ENCODE measurements at regions of chr15 and their contacts with region 1.

Region 1: DNA sequence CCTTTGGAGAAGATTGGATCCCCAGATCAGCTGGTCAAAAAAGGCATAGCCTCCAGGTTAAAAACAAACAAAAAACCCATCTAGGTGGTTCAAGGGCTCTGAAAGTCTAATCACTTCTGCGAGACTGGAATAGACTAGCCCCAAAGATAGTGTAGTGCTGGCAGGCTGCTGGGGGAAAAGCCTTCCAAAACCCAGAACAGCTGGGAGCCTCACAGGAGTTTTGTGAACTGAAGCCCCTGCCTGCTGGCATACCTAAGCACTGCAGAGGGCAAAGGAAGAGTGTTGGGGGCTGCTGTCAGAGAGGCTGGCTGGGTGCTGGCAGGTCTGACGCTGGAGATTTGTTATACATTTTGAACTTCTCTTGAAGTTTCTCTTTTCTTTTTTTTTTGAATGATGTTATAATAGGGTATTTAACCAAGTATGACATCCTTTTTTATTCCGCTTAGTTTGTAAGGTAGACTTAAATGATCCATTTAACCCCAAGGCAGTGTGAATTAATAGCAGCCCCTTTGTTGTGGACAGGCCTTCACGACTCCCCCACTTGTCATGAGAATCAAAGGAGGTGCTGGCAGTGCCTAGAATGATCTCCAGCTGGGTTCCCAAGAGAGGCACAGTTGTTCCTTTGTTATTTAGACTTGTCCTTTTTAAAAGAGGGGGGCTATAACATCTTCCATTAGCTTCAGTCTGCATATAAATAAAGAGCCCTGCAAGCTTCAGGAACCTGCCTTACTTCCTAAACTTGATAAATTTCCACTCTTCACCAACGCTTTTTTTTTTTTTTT is 53.9 kb downstream of the CRTC3 start:
- DNase-seq: no peak
- ATAC-seq: no peak
- H3K4me3 ChIP-seq: no peak overlapping the region
- H3K4me3 Mint-ChIP-seq: no peak overlapping the region
- H3K27ac ChIP-seq: no peak overlapping the region
- H3K27ac Mint-ChIP-seq: peak overlapping the region; percentile 89
- H3K4me1 ChIP-seq: peaks cover 59% of the 10 kb centered on the region
- H3K4me1 Mint-ChIP-seq: peaks cover 66% of the 10 kb centered on the region
- H3K27me3 ChIP-seq: no peaks in the 10 kb centered on the region
- H3K27me3 Mint-ChIP-seq: no peaks in the 10 kb centered on the region
- CTCF ChIP-seq: no peak

Region 2: GRCh38 chr15:90419738-90420406 is 163.8 kb before region 1 on chr15:
- CTCF ChIA-PET with region 1: no interaction called
- POLR2A ChIA-PET with region 1: no interaction called
- intact Hi-C with region 1: no loop called
- DNase-seq: no peak
- ATAC-seq: no peak
- H3K4me3 ChIP-seq: no peak overlapping the region
- H3K4me3 Mint-ChIP-seq: peak overlapping the region; percentile 26
- H3K27ac ChIP-seq: no peak overlapping the region
- H3K27ac Mint-ChIP-seq: peak overlapping the region; percentile 71
- H3K4me1 ChIP-seq: peaks cover 38% of the 10 kb centered on the region
- H3K4me1 Mint-ChIP-seq: peaks cover 72% of the 10 kb centered on the region
- H3K27me3 ChIP-seq: no peaks in the 10 kb centered on the region
- H3K27me3 Mint-ChIP-seq: no peaks in the 10 kb centered on the region
- CTCF ChIP-seq: no peak

Region 3: DNA sequence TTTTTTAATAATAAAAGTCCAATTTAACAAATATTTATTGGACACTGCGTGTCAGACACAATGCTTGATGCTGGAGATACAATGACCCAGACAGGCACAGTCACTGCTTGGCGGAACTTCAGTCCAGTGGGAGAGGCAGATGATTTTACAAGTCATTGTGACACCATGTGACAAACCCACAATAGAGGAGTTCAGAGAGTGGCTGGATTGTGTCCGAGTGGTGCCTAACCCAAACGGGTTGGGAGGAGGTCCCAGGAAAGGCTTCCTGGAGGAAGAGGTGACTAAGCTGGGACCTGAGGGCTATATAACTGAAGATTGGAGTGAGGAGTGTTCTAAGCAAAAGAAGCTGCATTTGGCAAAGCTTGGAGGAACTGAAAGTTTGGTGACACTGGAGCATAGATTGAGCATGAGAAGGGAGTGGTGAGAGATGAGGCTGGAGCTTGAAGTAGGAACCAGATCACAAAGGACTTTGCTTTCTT is 12.6 kb before region 1 on chr15:
- CTCF ChIA-PET with region 1: interaction called, 5 read pairs
- POLR2A ChIA-PET with region 1: interaction called, 3 read pairs
- intact Hi-C with region 1: loop called in 1 of 2 experiments (anchors 1 kb)
- DNase-seq: peak in 2 of 14 experiments; percentile 53 to 60
- ATAC-seq: no peak
- H3K4me3 ChIP-seq: no peak overlapping the region
- H3K4me3 Mint-ChIP-seq: no peak overlapping the region
- H3K27ac ChIP-seq: peak overlapping the region in 1 of 2 donors; percentile 32
- H3K27ac Mint-ChIP-seq: peak overlapping the region; percentile 77
- H3K4me1 ChIP-seq: peaks cover 77% of the 10 kb centered on the region
- H3K4me1 Mint-ChIP-seq: peaks cover 89% of the 10 kb centered on the region
- H3K27me3 ChIP-seq: no peaks in the 10 kb centered on the region
- H3K27me3 Mint-ChIP-seq: no peaks in the 10 kb centered on the region
- CTCF ChIP-seq: no peak

Region 4: DNA sequence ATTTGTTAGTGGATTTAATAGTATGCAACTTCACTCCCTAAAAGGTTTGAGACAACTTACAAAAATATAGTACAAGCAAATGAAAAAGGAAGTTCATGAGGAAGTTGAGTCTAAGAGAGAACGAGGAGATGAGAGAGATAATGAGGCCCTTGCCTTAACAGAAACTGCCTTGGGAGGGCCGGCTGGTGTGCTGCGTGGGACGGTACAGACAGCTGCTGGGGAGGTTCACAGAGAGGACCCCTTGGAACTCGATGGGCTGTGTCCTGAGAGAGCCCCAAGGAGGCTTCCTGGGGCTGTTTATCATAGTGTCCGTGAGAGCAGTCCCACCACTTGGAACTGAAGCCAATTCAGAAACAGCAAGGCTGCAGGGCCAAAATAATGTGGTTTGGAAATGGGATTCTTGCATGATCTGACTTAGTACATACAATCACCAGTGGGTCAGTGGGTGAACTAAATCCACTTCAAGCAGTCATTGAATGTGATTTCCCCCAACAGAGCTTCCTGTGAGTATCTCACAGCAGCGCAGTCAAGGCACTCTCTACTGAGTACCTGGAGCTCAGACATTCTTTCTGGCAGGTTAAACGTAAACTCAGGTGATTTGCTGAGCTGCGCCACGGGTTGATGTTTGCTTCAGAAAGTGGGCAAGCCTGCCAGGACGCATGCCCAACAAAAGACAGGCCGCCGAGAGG is 36.9 kb after region 1 on chr15:
- CTCF ChIA-PET with region 1: no interaction called
- POLR2A ChIA-PET with region 1: no interaction called
- intact Hi-C with region 1: no loop called
- DNase-seq: peak in 7 of 14 experiments; percentile 10 to 52 (median 40)
- ATAC-seq: peak; percentile 71
- H3K4me3 ChIP-seq: peak overlapping the region; percentile 6
- H3K4me3 Mint-ChIP-seq: peak overlapping the region; percentile 25
- H3K27ac ChIP-seq: peak overlapping the region in 1 of 2 donors; percentile 41
- H3K27ac Mint-ChIP-seq: peak overlapping the region; percentile 89
- H3K4me1 ChIP-seq: peaks cover 24% of the 10 kb centered on the region
- H3K4me1 Mint-ChIP-seq: peaks cover 46% of the 10 kb centered on the region
- H3K27me3 ChIP-seq: no peaks in the 10 kb centered on the region
- H3K27me3 Mint-ChIP-seq: no peaks in the 10 kb centered on the region
- CTCF ChIP-seq: no peak

Region 5: DNA sequence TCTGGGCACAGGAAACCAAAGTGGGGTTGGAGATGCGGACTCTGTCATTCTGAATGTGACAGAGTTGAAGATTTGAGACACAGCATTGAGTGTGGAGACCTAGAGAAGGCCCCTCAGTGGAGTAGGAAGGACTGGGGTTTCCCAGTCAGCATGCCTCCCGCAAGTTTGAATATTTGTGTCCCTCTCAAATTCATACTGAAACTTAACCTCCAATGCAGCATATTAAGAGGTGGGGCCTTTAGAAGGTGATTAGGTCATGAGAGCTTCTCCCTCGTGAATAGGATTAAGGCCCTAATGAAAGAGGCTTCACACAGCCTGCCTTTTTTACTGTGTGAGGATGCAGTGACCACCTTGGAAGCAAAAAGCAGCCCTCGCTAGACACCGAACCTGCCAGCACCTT is 340.7 kb after region 1 on chr15:
- CTCF ChIA-PET with region 1: no interaction called
- POLR2A ChIA-PET with region 1: no interaction called
- intact Hi-C with region 1: no loop called
- DNase-seq: no peak
- ATAC-seq: no peak
- H3K4me3 ChIP-seq: no peak overlapping the region
- H3K4me3 Mint-ChIP-seq: no peak overlapping the region
- H3K27ac ChIP-seq: no peak overlapping the region
- H3K27ac Mint-ChIP-seq: no peak overlapping the region
- H3K4me1 ChIP-seq: peaks cover 4% of the 10 kb centered on the region
- H3K4me1 Mint-ChIP-seq: peaks cover 2% of the 10 kb centered on the region
- H3K27me3 ChIP-seq: no peaks in the 10 kb centered on the region
- H3K27me3 Mint-ChIP-seq: no peaks in the 10 kb centered on the region
- CTCF ChIP-seq: no peak